Pancreas (tissue), 10 donors: ENCODE measurements at regions of chr6 and their contacts with region 1.

Region 1: GRCh38 chr6:41463062-41463930 is 82.9 kb upstream of the FOXP4 start:
- DNase-seq: peak in 5 of 6 donors; percentile 61 to 84 (median 74)
- ATAC-seq: peak; percentile 94 to 99 (median 96)
- H3K4me3 ChIP-seq: no peak overlapping the region
- H3K27ac ChIP-seq: no peak overlapping the region
- H3K4me1 ChIP-seq: no peaks in the 10 kb centered on the region
- H3K27me3 ChIP-seq: no peaks in the 10 kb centered on the region
- CTCF ChIP-seq: peak; percentile 17 to 62 (median 60)

Region 2: GRCh38 chr6:41334482-41335040 is 128.7 kb before region 1 on chr6:
- intact Hi-C with region 1: no loop called
- DNase-seq: no peak
- ATAC-seq: no peak
- H3K4me3 ChIP-seq: no peak overlapping the region
- H3K27ac ChIP-seq: no peak overlapping the region
- H3K4me1 ChIP-seq: no peaks in the 10 kb centered on the region
- H3K27me3 ChIP-seq: no peaks in the 10 kb centered on the region
- CTCF ChIP-seq: no peak

Region 3: GRCh38 chr6:41413250-41413649 is 50.0 kb before region 1 on chr6:
- intact Hi-C with region 1: no loop called
- DNase-seq: no peak
- ATAC-seq: no peak
- H3K4me3 ChIP-seq: no peak overlapping the region
- H3K27ac ChIP-seq: no peak overlapping the region
- H3K4me1 ChIP-seq: no peaks in the 10 kb centered on the region
- H3K27me3 ChIP-seq: no peaks in the 10 kb centered on the region
- CTCF ChIP-seq: no peak

Region 4: GRCh38 chr6:41591859-41592502 is 128.7 kb after region 1 on chr6:
- intact Hi-C with region 1: loop called in 1 of 3 experiments (anchors 5 kb)
- DNase-seq: peak; percentile 56 to 91 (median 80)
- ATAC-seq: peak; percentile 58 to 85 (median 75)
- H3K4me3 ChIP-seq: no peak overlapping the region
- H3K27ac ChIP-seq: no peak overlapping the region
- H3K4me1 ChIP-seq: no peaks in the 10 kb centered on the region
- H3K27me3 ChIP-seq: no peaks in the 10 kb centered on the region
- CTCF ChIP-seq: peak; percentile 82 to 95 (median 90)

Region 5: GRCh38 chr6:41683510-41684310 is 220.4 kb after region 1 on chr6:
- intact Hi-C with region 1: loop called in 1 of 3 experiments (anchors 5 kb)
- DNase-seq: peak; percentile 49 to 88 (median 71)
- ATAC-seq: peak; percentile 58 to 84 (median 67)
- H3K4me3 ChIP-seq: peak overlapping the region in 1 of 4 donors; percentile 36
- H3K27ac ChIP-seq: peak overlapping the region in 1 of 4 donors; percentile 70
- H3K4me1 ChIP-seq: peaks cover 0 to 9% (median 6%) of the 10 kb centered on the region in 3 donors
- H3K27me3 ChIP-seq: no peaks in the 10 kb centered on the region
- CTCF ChIP-seq: peak; percentile 66 to 75 (median 72)